ENCODE measurements at regions of chr22 and their contacts with region 1.

Region 1: DNA sequence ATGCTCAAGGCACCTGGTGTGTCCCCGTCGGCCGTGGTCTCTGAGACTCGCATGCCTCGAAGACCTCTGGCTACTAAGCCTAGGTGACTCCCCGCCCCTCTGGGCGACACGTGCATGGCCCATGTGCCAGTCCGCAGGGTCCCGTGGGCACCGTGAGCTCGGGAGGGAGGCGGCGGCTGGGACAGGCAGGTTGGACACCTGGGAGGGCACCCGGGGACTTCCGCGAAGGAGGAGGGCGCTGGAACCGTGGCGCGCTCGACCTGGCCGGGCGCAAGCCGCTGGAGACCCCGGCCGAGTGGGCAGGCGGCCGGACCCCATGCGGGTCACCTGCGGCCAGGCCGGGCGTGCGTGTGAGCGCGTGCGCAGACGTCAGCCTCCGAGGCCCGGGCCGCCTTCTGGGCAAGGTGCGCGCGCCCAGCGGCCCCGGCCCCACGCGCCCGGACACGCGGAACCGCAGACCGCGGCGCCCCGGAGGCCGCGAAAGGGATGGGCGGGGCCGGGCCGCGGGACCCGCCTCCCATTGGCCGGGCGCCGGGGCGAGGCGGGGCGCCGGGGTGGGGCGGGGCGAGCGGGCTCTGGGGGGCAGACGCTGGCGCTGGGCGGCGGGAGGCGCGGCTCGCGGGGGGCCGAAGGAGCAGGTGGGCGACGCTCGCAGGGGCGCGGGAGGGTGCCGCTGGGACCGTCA is 579 bp upstream of the RASD2 start:
- DNase-seq: peak in 1 of 2 experiments; percentile 58
- H3K4me3 ChIP-seq: peak overlapping the region; percentile 90
- H3K27ac ChIP-seq: no peak overlapping the region
- H3K4me1 ChIP-seq: peaks cover 32% of the 10 kb centered on the region
- H3K27me3 ChIP-seq: no peaks in the 10 kb centered on the region
- CTCF ChIP-seq: no peak

Region 2: DNA sequence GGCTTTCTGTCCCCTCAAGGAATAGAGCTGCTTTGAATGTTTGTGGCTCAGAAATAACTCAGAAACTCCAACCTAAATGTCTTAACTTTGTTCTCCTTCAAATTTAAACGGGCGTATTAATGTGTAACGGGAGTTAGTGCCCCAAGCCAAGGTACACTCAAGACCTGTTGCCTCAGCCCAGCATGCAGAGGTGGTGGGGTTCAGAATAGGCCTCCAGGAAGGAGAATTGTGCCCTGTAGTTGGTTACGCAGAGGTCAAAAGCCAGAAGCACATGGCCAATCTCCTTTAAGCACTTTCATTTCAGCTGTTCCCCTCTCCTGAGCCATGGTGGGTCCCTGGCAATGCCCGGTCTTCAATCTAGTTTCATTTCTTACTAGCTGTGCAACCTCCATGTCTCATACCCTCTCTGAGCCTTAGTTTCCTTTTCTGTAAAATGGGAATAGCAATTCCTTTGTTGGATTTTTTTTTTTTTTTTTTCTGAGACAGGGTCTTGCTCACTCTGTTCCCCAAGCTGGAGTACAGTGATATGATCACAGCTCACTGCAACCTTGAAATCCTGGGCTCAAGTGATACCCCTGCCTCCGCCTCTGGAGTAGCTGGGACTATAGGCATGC is 155.0 kb before region 1 on chr22:
- CTCF ChIA-PET with region 1: interaction called, 11 read pairs
- POLR2A ChIA-PET with region 1: no interaction called
- intact Hi-C with region 1: no loop called
- DNase-seq: no peak
- H3K4me3 ChIP-seq: no peak overlapping the region
- H3K27ac ChIP-seq: no peak overlapping the region
- H3K4me1 ChIP-seq: peaks cover 23% of the 10 kb centered on the region
- H3K27me3 ChIP-seq: no peaks in the 10 kb centered on the region
- CTCF ChIP-seq: no peak

Region 3: GRCh38 chr22:35552196-35552842 is 12.3 kb after region 1 on chr22:
- CTCF ChIA-PET with region 1: interaction called, 12 read pairs
- POLR2A ChIA-PET with region 1: no interaction called
- intact Hi-C with region 1: no loop called
- DNase-seq: peak in 1 of 2 experiments; percentile 51
- H3K4me3 ChIP-seq: no peak overlapping the region
- H3K27ac ChIP-seq: no peak overlapping the region
- H3K4me1 ChIP-seq: no peaks in the 10 kb centered on the region
- H3K27me3 ChIP-seq: no peaks in the 10 kb centered on the region
- CTCF ChIP-seq: no peak

Region 4: DNA sequence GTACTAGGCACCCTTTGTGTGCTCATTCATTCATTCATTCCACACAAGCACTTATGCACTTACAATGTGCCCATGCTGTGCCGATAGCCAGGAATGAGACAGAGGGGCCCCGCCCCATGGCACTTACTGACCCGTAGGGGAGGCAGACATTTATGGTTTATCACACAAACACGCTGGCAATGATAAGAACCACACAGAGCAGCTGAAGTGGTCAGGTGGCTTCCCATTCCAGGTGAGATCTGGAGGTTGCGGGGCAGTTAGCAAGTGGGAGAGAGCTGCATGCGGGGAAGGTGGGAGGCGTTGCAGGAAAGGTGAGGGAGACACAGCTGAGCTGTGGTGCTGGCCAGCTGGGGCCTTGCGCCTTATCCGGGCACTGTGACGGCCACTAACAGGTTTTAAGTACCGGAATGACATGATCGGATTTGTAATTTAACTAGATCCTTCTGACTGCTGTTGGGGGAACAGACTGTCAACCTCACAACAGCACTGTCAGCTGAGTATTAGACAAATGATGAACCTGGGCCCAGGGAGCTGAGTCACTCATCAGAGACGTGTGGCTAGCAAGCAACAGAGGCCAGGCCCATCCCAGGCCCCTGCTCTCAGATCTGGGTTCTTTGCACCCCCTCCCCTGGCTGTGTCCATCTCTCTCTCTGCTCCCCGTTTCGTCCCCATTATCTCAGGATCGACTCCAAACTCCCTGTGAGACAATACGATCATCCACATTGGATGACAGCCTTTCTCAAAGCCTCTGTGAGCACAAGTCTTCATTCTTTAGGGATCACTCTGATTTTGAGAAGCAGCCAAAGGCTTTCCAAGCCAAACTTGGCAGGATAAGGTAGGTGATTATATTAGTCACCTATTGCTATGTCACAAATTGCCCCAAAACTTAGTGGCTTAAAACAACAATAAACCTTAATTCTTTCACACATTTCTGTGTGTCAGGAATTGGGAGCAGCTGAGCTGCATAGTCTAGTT is 29.0 kb after region 1 on chr22:
- CTCF ChIA-PET with region 1: interaction called, 3 read pairs
- POLR2A ChIA-PET with region 1: no interaction called
- intact Hi-C with region 1: loop called (anchors 2 kb)
- DNase-seq: peak; percentile 43 to 74
- H3K4me3 ChIP-seq: no peak overlapping the region
- H3K27ac ChIP-seq: peak overlapping the region; percentile 24; the same call in 1 of the 2 replicates
- H3K4me1 ChIP-seq: peaks cover 15% of the 10 kb centered on the region
- H3K27me3 ChIP-seq: no peaks in the 10 kb centered on the region
- CTCF ChIP-seq: no peak

Region 5: GRCh38 chr22:37088108-37088605 is 1548.1 kb after region 1 on chr22:
- CTCF ChIA-PET with region 1: no interaction called
- POLR2A ChIA-PET with region 1: no interaction called
- intact Hi-C with region 1: no loop called
- DNase-seq: peak; percentile 54 to 79
- H3K4me3 ChIP-seq: no peak overlapping the region
- H3K27ac ChIP-seq: no peak overlapping the region
- H3K4me1 ChIP-seq: 0 out of 2 replicates have a peak, but pooled peaks cover 7% of the 10 kb centered on the region
- H3K27me3 ChIP-seq: peaks cover 16% of the 10 kb centered on the region
- CTCF ChIP-seq: no peak